SK-N-SH (cell line): ENCODE measurements at regions of chr2 and their contacts with region 1.

Region 1: DNA sequence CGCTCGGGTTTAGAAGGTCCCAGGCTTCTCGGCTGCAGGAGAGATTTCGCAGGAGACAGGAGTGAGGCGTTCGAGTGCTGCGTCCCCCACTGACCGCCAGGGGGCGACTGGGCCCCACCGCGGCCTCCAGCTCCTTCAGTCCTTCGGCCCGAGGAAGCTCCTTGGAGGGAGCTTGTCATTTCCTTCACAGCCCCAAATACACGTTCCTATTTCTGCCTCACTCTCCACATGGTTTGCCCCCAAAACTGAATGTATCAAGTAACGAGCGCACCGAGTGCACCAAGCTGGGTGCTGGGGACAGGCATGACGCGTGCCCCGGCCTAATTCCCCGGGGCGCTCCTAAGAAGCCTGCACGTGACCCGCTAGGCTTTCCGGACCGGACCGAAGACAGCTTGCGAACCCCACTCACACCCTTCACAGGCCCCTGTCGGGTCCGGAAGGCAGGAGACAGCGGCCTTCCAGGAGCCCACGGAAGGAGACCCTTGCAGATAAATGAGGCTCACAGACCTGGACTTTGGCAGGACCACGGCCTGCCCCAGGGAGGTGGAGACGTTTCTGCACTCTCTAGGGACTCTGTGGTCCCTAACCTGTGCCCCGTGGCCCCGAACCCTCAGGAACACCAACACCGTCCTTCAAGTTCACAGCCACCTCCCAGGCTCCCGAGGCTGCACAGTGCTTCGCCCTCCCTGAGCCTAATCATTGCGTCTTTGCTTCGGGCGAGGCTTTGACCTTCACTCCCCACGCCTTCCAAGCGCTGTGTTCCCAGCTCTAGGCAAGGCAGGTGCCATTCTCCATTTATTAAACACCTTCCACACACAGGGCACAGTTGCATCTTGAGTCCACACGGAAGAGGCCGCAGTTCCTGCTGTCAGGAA is 13.0 kb upstream of the FAHD2A start:
- DNase-seq: peak; percentile 86
- H3K4me3 ChIP-seq: peak overlapping the region in 1 of 2 experiments; percentile 29; a peak in 1 of 4 replicates
- H3K27ac ChIP-seq: no peak overlapping the region
- H3K4me1 ChIP-seq: no peaks in the 10 kb centered on the region
- H3K27me3 ChIP-seq: no peaks in the 10 kb centered on the region; the same call in 1 of the 2 replicates
- CTCF ChIP-seq: peak; percentile 87
- EP300 ChIP-seq: no peak
- RAD21 ChIP-seq: peak; percentile 67

Region 2: GRCh38 chr2:95345566-95346230 is 43.8 kb before region 1 on chr2:
- CTCF ChIA-PET with region 1: interaction called, 24 read pairs
- POLR2A ChIA-PET with region 1: no interaction called
- DNase-seq: peak; percentile 95
- H3K4me3 ChIP-seq: peak overlapping the region; percentile 51 to 70
- H3K27ac ChIP-seq: no peak overlapping the region
- H3K4me1 ChIP-seq: peaks cover 4 to 7% of the 10 kb centered on the region in 2 experiments; a peak in 2 of 4 replicates
- H3K27me3 ChIP-seq: peaks cover 68% of the 10 kb centered on the region
- CTCF ChIP-seq: peak; percentile 81
- EP300 ChIP-seq: no peak
- RAD21 ChIP-seq: peak; percentile 70

Region 3: DNA sequence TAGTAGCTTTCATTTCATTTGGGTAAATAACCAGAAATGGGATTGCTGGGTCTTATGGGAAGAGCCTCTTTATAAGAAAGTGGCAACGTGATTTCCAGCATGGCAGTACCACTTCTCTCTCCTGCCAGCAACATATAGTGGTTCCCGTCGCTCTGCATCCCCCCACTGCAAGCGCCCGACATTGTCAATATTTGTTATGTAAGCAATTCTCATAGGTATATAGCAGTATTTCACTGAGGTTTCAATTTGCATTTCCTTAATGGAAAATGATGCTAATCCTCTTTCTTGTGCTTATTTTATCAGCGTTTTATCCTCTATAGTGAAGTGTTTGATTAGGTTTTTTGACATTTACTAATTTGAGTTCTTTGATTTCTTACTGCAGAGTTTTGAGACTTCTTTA is 23.0 kb before region 1 on chr2:
- CTCF ChIA-PET with region 1: interaction called, 14 read pairs
- POLR2A ChIA-PET with region 1: no interaction called
- DNase-seq: peak; percentile 8
- H3K4me3 ChIP-seq: 0 out of 4 replicates have a peak overlapping the region, but pooled peaks of 1 of the 2 experiments have one; percentile 3
- H3K27ac ChIP-seq: no peak overlapping the region
- H3K4me1 ChIP-seq: no peaks in the 10 kb centered on the region
- H3K27me3 ChIP-seq: peaks cover 15% of the 10 kb centered on the region; the same call in 1 of the 2 replicates
- CTCF ChIP-seq: no peak
- EP300 ChIP-seq: no peak
- RAD21 ChIP-seq: no peak

Region 4: GRCh38 chr2:95379371-95379831 is 10.1 kb before region 1 on chr2:
- CTCF ChIA-PET with region 1: interaction called, 19 read pairs
- POLR2A ChIA-PET with region 1: no interaction called
- DNase-seq: no peak
- H3K4me3 ChIP-seq: no peak overlapping the region
- H3K27ac ChIP-seq: no peak overlapping the region
- H3K4me1 ChIP-seq: no peaks in the 10 kb centered on the region
- H3K27me3 ChIP-seq: peaks cover 15% of the 10 kb centered on the region; the same call in 1 of the 2 replicates
- CTCF ChIP-seq: peak; percentile 42
- EP300 ChIP-seq: no peak
- RAD21 ChIP-seq: no peak

Region 5: DNA sequence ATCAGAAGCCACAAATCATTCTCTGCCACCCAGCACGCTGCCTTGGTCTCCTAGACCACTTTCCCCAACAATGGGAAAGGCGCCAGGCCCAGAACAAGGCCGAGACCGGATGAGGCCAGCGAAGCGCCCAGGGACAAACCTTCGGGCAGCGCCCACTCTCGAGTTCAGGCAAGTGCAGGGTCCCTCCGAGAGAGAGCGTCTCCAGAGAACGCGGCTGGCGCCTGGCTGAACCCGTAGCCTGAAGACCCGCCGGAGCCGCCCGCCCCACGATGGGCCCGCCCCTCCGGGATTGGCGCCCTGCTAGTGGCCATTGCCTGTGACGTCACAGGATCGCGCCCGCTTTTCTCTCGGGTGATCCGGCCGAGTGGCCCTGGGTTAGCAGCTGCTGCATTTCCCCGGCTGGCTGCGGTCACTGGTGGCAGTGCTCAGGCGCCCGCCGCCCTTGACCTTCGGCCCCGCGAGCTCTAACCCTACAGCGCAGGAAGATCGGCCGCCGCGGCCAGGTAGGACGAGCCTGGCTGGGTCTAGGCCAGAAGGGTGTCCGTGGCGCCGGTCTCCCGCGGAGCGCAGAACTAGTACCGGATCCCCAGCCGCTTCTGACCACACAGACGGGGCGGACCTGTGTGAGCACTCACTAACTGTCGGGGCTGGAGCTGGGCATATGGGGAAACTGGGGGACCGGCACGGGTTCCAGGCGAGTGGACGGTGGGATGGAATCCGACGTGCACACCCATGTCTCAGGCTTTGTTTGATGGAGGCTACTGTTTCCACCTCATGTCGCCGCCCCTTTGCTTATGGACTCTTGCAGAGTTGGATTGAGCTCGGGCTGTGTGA is 13.1 kb after region 1 on chr2 and contains the start of gene FAHD2A:
- CTCF ChIA-PET with region 1: interaction called, 27 read pairs
- POLR2A ChIA-PET with region 1: no interaction called
- DNase-seq: peak; percentile 98
- H3K4me3 ChIP-seq: peak within 1 kb of the TSS; percentile 93 to 99
- H3K27ac ChIP-seq: peak within 1 kb of the TSS; percentile 53 to 60; a peak in 3 of 4 replicates
- H3K4me1 ChIP-seq: peaks cover 6 to 18% of the 10 kb centered on the region in 2 experiments; a peak in 2 of 4 replicates
- H3K27me3 ChIP-seq: no peaks in the 10 kb centered on the region
- CTCF ChIP-seq: no peak
- EP300 ChIP-seq: no peak
- RAD21 ChIP-seq: no peak
- polyA plus RNA-seq, gene FAHD2A: 40.5 and 48.2 TPM in 2 replicates

Region 6: GRCh38 chr2:95728878-95729596 is 339.6 kb after region 1 on chr2:
- CTCF ChIA-PET with region 1: interaction called, 12 read pairs
- POLR2A ChIA-PET with region 1: no interaction called
- DNase-seq: peak; percentile 44
- H3K4me3 ChIP-seq: no peak overlapping the region; a peak in 1 of 4 replicates
- H3K27ac ChIP-seq: no peak overlapping the region
- H3K4me1 ChIP-seq: no peaks in the 10 kb centered on the region
- H3K27me3 ChIP-seq: no peaks in the 10 kb centered on the region
- CTCF ChIP-seq: peak; percentile 73
- EP300 ChIP-seq: no peak
- RAD21 ChIP-seq: peak; percentile 86